ENCODE measurements at regions of chr7 and their contacts with region 1.

Region 1: GRCh38 chr7:47418601-47419381 is 163.1 kb downstream of the TNS3 start:
- DNase-seq: no peak
- H3K4me3 ChIP-seq: no peak overlapping the region
- H3K27ac ChIP-seq: no peak overlapping the region
- H3K4me1 ChIP-seq: no peaks in the 10 kb centered on the region
- H3K27me3 ChIP-seq: no peaks in the 10 kb centered on the region
- CTCF ChIP-seq: no peak

Region 2: GRCh38 chr7:46630031-46630430 is 788.8 kb before region 1 on chr7:
- intact Hi-C with region 1: no loop called
- DNase-seq: no peak
- H3K4me3 ChIP-seq: no peak overlapping the region
- H3K27ac ChIP-seq: no peak overlapping the region
- H3K4me1 ChIP-seq: no peaks in the 10 kb centered on the region
- H3K27me3 ChIP-seq: no peaks in the 10 kb centered on the region
- CTCF ChIP-seq: no peak

Region 3: GRCh38 chr7:46738165-46738564 is 680.6 kb before region 1 on chr7:
- intact Hi-C with region 1: no loop called
- DNase-seq: no peak
- H3K4me3 ChIP-seq: no peak overlapping the region
- H3K27ac ChIP-seq: no peak overlapping the region
- H3K4me1 ChIP-seq: no peaks in the 10 kb centered on the region
- H3K27me3 ChIP-seq: no peaks in the 10 kb centered on the region
- CTCF ChIP-seq: no peak

Region 4: DNA sequence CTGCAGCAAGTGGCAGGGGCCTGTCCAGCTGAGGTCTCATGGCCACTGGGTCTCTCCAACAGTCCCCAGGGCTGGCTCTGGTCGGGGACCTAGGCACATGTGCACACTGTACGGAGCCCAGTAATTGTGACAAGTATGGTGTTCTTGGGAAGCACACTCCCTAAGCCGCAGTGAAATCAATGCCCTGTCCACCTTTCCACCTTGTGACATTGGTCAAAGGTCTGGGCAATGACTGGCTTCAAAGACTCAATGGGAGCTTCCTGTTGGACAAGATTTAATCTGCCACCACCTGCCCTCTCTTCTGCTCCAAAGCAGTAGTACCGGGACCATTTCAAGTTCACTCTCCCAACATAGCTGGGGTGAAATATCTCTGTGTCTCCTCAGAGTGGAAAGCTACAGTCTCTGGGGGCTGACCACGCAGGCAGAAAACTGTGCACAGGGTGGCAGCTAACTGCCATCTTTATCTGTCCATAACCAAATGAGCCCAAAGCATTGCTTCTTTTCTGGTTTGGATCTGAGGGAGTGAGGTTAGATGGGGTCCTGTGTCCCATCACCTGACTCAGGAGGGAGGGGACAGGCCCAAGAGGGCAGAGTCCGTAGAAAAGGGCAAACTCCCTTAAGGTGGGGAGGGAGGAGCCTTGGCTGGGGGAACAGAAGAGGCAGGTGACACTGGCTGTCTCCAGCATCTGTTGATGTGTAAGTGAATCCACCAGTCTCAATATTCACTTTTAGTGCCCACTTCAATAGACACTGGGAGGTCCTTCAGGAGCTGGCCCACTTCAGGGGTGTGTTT is 144.6 kb before region 1 on chr7:
- intact Hi-C with region 1: loop called (anchors 10 kb)
- DNase-seq: peak; percentile 17
- H3K4me3 ChIP-seq: no peak overlapping the region
- H3K27ac ChIP-seq: no peak overlapping the region
- H3K4me1 ChIP-seq: no peaks in the 10 kb centered on the region
- H3K27me3 ChIP-seq: no peaks in the 10 kb centered on the region
- CTCF ChIP-seq: no peak

Region 5: DNA sequence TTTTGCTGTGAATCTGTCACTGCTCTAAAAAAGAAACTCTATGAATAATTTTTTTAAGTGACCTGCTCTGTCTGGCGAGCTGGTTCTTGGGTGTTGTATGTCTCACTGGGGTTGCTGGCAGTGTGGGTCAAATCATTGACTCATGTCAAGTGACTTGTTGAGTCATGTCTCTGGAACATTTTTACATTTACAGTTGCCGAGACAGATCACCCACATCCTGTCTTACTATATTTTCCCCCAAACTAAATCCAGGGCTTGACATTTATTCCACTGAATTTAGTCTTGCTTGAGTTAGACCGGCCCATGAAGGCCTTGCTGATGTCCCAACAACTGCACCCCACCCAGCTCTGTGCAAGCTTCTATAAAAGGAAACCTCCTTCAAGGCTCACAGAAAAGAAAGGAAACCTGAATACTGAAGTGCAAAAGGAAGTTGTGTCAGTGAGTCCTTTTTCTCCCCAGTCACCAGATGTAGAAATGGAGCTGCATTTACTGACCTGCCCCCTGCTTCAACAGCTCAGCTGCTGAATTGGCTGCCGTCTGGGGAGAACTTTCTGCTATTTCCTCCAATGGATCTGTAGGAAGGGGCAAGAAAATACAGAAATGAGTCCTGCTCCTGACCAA is 127.2 kb before region 1 on chr7:
- intact Hi-C with region 1: no loop called
- DNase-seq: peak; percentile 19
- H3K4me3 ChIP-seq: no peak overlapping the region
- H3K27ac ChIP-seq: peak overlapping the region; percentile 46
- H3K4me1 ChIP-seq: no peaks in the 10 kb centered on the region
- H3K27me3 ChIP-seq: no peaks in the 10 kb centered on the region
- CTCF ChIP-seq: no peak

Region 6: DNA sequence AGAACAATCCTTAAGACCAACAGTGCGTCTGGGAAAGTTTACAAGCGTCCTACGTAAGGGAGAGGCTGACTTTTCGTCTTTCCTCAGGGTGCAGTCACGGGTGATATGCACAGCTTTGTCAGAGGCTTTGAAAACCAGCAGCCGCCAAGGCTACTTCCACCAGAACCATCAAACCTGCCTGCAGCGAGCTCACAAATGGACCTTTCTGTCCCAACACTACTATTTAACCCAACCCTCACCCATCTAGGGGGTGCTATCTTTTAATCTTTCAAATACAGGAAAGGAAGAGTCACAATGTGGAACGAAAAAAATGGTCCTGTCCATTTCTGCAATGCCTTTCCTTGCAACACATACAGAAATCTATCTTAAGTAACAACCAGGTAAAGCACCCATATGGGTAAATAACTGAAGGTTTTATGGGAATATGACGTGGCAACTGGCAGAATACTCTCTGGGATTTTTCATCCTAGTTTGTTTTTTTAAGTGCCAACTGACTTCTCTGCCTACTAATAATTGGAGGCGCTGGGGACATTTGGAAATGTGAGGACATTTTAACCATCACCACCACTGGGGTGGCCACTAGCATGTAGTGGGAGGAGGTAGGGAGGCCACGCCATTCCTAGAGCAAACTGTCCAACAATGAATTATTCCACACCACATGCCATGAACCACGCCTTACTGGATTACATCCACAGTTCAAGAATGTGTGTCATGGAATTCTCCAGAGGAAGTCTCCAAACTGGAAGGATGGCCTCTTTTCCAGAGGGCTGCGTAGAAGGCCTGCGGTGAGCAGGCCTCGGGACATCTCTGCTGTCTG is 138.6 kb after region 1 on chr7:
- intact Hi-C with region 1: no loop called
- DNase-seq: no peak
- H3K4me3 ChIP-seq: no peak overlapping the region
- H3K27ac ChIP-seq: no peak overlapping the region
- H3K4me1 ChIP-seq: no peaks in the 10 kb centered on the region
- H3K27me3 ChIP-seq: no peaks in the 10 kb centered on the region
- CTCF ChIP-seq: no peak

Measured in colonic mucosa (tissue), 4 donors.